ENCODE measurements at regions of chr3 and their contacts with region 1.

Region 1: GRCh38 chr3:113211330-113212149 is at the start of gene BOC:
- DNase-seq: no peak
- total RNA-seq, gene BOC: 12.8 TPM

Region 2: GRCh38 chr3:113151461-113152031 is 60.0 kb before region 1 on chr3:
- intact Hi-C with region 1: loop called (anchors 5 kb)
- DNase-seq: no peak

Region 3: DNA sequence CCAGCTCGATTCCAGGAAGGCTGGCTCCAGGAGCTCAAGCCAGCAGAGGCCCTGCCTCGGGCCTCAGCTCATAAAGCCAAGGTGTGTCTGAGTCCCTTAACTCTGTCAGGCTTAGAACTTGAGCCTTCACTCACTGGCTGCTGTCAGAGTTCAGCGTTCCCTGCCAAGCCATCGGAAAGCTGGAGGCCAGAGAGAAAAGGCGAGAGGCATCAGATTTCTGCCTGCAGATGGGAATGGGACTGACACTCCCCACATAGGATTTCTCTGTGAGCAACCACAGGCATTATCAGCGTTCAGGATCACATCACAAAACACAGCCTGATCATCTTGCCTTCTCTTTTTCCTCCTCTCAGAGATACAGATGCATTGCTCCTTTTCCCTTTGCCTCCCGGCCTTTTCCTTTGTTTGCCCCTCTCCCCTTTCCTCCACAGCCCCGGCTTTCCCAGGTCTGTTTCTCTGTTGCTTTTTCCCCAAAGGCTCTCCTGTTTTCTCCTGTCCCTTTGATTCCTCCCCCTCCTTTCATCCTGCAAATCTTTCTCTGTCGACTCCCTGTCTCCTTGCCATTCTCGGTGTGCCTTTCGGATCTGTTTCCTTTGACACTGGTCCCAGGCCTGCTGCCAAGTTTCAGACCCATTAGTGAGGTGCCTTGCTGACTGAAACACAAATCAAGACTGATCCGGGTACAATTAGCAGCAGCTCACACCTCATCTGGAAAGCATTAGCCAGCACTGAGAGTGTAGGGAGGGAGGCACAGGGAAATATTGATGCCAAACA is 44.6 kb before region 1 on chr3:
- intact Hi-C with region 1: loop called (anchors 5 kb)
- DNase-seq: no peak

Region 4: DNA sequence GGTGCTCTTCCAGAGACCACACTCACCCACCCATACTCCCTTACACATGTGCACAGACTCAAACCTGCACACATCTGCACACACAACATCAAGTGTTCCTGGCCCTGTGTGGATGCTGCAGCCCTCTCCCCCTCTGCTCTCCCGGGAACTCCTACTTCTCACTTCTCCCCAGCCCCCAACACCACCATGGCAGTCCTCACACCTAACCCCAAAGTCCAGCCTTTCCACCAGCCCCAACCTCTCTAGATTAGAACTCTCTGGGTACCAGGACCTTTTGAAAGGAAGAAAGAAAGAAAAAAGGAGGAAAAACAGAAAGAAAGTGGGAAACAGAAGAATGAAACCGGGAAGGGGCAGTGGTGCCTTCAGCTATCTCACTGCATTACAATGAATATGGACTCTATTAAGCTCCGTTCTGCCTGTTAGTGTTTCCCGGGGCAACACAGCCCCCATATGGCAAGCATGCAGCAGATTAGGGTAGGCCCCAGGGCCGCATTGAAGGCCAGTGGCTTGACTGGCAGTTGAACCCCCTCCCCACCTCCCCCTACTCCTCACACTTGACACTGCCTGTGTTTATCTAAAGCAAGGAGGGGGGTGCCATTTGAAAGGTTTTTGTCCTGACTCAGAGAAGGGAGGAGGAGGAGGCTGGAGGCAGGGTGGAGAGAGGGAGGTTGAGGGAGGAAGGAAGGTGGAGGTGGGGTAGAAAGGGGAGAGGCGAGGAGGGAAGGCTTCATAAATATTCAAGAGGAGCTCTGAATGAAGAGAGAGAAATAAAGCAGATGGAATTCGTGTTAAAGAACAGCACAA is 30.0 kb after region 1 on chr3:
- intact Hi-C with region 1: loop called (anchors 2 kb)
- DNase-seq: no peak

Region 5: GRCh38 chr3:113287803-113288648 is 76.5 kb after region 1 on chr3:
- intact Hi-C with region 1: loop called (anchors 5 kb)
- DNase-seq: no peak

Region 6: DNA sequence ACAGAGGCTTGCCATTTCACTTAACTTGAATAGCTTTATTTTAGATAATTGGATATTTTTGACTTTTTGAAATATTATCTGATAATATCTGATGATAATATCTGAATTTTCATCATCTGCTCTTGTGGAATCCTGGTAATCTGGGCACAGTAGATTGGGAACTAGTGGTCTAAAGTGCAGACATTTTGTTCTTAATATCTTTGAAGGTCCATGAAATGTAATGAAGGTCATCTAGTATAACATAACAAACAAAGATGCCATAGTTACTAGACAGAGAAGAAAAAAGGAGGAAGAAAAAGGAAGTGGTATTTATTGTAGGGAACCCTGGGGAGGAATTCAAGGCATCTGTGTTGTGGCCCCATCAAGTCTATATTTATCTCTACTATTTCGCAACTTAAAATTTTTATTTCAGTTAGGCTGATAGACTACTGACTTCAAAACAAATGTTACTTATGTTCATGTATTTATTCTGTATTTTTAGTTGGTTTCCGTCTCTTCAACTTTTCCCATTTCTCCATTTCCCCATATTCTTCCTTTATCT is 687.3 kb after region 1 on chr3:
- intact Hi-C with region 1: no loop called
- DNase-seq: no peak